Activated CD4-positive, alpha-beta T cell treated with anti-CD3 and anti-CD28 coated beads for 36 hours (primary cell): ENCODE measurements at regions of chr12 and their contacts with region 1.

Region 1: GRCh38 chr12:116135209-116135930 is 142.1 kb downstream of the MED13L start:
- DNase-seq: no peak
- ATAC-seq: peak; percentile 34
- H3K4me3 Mint-ChIP-seq: no peak overlapping the region
- H3K27ac Mint-ChIP-seq: peak overlapping the region; percentile 47
- H3K4me1 Mint-ChIP-seq: peaks cover 79% of the 10 kb centered on the region
- H3K27me3 Mint-ChIP-seq: no peaks in the 10 kb centered on the region

Region 2: GRCh38 chr12:115251727-115252126 is 883.6 kb before region 1 on chr12:
- CTCF ChIA-PET with region 1: no interaction called
- POLR2A ChIA-PET with region 1: no interaction called
- intact Hi-C with region 1: no loop called
- DNase-seq: no peak
- ATAC-seq: no peak
- H3K4me3 Mint-ChIP-seq: no peak overlapping the region
- H3K27ac Mint-ChIP-seq: no peak overlapping the region
- H3K4me1 Mint-ChIP-seq: no peaks in the 10 kb centered on the region
- H3K27me3 Mint-ChIP-seq: peaks cover 3% of the 10 kb centered on the region

Region 3: DNA sequence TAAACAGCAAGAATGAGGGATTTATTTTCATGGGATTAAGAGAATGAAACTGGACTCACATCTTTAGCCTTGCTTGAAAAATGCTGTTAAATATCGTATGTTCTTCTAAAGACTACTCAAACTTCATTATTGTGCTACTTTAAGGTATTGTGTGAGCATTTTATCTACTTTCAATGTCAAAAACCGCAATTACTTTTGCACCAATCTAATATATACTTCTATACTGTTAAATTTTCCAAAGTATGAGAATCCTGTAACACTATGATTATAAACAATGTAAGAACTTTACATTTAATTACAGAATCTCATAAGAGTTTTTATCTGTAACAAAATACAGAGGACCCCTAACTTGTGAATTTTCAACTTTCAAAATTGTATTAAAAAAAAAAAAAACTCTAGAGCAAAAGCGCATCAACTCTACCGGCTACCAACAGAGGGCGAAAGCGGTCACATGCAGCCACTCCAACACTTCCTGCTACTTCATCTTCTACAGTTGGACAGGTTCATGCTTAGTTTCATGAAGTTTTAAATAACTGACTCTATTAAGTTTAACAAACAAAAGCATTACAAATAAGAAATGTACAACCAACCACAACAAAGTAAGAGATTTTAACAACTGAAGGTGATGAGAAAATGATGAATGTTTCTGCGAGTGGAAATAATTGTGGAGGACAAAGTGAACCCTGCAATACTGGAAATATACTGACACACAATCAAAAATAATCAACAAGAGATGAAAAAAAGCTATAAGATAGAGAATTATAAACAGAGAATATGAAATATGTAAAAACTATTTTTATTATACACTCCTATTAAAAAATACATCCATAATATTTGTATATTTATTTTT is 68.8 kb before region 1 on chr12:
- CTCF ChIA-PET with region 1: interaction called, 6 read pairs
- POLR2A ChIA-PET with region 1: no interaction called
- intact Hi-C with region 1: loop called in 1 of 2 experiments (anchors 2 kb)
- DNase-seq: peak; percentile 78
- ATAC-seq: peak; percentile 83
- H3K4me3 Mint-ChIP-seq: no peak overlapping the region
- H3K27ac Mint-ChIP-seq: peak overlapping the region; percentile 12
- H3K4me1 Mint-ChIP-seq: peaks cover 36% of the 10 kb centered on the region
- H3K27me3 Mint-ChIP-seq: no peaks in the 10 kb centered on the region

Region 4: DNA sequence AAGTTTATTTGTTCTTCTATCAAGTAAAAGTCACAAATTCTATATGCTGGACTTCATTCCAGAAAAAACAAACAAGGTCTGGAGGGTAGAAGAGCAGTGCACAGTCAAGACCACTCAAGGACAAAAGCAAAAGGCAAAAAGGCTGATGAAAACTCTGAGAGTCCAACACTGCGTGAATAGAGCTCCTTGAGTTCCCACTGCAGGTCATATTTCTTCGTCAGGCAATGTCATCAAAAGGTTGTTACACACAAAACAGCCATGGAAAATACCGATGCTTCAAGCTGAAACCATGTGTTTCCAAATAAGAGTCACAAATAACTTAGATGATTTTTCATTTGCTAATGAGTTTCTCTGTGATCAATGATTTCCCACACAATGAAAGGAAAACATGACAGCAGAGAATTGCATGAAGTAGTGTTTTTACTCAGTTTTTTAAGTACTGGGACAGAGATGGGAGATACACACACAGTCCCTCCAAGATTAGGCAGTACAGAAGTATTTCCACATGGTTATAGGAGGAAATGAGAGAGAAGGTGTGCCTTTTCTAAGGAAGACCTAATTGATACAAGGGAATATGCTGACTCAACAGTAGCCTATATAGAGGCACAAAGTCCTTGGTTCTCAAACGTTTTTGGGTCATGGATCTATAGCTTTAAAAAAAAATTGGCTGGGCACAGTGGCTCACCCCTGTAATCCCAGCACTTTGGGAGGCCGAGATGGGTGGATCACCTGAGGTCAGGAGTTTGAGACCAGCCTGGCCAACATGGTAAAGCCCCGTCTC is 35.5 kb before region 1 on chr12:
- CTCF ChIA-PET with region 1: interaction called, 4 read pairs
- POLR2A ChIA-PET with region 1: no interaction called
- intact Hi-C with region 1: loop called in 1 of 2 experiments (anchors 1 kb)
- DNase-seq: peak; percentile 22
- ATAC-seq: peak; percentile 89
- H3K4me3 Mint-ChIP-seq: no peak overlapping the region
- H3K27ac Mint-ChIP-seq: peak overlapping the region; percentile 69
- H3K4me1 Mint-ChIP-seq: peaks cover 35% of the 10 kb centered on the region
- H3K27me3 Mint-ChIP-seq: no peaks in the 10 kb centered on the region

Region 5: DNA sequence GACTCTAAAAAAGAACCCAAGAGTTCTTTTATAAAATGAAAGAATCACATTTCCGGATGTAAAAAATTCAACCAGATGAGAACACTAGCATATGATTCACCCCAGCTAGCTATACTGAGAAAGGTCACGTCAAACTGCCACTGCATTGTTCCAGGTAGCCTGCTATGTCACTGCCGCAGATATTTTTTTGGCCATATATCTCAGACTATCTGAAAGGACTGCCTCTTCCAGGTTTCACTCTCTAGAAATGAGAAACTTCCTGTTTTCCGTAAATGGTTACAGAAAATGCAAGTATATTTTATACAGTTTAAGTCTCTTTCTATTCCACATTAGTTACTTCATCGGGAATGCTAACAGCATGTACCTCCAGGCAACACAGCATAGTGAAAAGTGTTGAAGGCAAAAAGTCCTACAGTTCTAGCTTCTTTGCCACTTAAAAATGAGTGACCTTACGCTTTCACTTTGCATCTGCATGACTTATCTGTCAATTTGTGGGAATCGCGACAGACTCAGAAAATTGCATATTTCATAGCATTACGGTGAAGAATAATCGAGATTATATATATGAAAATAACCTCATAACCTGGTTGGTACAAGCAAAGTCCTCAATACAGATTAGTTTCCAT is 37.0 kb after region 1 on chr12:
- CTCF ChIA-PET with region 1: no interaction called
- POLR2A ChIA-PET with region 1: interaction called, 4 read pairs
- intact Hi-C with region 1: loop called in 1 of 2 experiments (anchors 5 kb)
- DNase-seq: peak; percentile 73
- ATAC-seq: peak; percentile 99
- H3K4me3 Mint-ChIP-seq: peak overlapping the region; percentile 73
- H3K27ac Mint-ChIP-seq: peak overlapping the region; percentile 97
- H3K4me1 Mint-ChIP-seq: peaks cover 72% of the 10 kb centered on the region
- H3K27me3 Mint-ChIP-seq: no peaks in the 10 kb centered on the region